GM10248 (cell line): ENCODE measurements at regions of chr9 and their contacts with region 1.

Region 1: DNA sequence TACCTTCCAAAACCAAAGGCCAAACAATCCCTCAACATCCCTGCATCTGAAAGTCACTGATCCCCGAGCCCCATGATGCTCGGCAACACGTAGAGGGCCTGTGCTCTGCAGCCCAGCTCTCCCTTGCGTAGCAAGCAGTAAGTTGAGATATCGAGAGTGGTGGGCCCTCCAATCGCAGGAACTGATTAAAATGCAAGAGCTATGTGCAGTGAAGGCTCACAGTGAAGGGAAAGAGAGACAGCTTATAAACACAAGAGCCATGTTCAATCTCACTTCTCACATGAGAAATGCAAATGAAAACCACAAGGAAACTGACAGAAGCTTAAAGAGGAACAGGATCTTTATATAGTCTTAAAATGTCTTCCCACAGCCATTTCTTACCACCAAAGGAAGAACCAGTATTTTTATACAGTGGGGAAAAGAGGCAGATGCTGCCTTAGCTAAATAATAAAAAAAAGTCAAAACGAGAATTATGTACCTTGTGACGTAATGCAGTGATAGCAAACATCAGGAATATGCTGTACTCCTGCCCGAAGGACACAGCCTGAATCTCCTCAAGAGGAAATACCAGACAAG is 24.6 kb downstream of the TTF1 start:
- DNase-seq: peak; percentile 71
- CTCF ChIP-seq: no peak

Region 2: DNA sequence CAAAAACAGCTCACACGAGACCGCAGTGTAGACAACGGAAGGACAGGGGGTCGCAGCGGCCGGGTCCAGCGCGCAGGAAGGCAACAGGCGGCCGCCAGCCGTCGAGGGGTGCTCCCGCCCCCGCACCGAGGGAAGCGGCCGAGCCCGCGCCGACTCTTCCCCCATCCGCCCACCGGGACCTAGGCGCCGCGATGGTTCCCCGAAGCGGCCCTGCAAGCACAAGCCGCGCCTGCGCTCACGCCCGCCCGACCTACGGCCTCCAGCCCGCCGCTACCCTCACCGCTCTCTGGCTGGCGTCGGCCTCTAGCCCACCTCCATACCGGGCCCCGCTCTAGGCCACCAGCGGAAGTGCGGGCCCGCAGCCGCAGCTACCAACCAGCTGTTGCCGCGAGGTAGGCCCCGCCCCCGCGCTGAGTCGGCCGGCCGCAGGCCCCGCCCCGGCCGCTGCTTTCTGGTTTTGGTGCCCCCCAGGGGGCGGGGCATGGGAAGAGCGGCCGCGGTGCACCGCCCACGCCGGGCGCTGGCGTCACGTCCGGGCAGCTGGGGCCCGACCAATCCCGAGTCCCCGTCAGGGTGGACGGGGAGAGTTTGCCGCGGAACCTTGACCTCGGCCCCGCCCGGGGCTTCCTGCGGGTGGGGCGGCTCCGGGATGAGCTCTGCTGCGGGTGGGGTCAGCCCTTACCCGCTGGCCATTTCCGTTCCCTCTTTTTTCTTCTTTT is 27.3 kb before region 1 on chr9 and contains the start of gene SETX:
- CTCF ChIA-PET with region 1: interaction called, 4 read pairs
- POLR2A ChIA-PET with region 1: interaction called, 14 read pairs
- DNase-seq: peak; percentile 100
- CTCF ChIP-seq: no peak